ENCODE measurements at regions of chr4 and their contacts with region 1.

Region 1: GRCh38 chr4:14138106-14138505 is 510.6 kb upstream of the BOD1L1 start:
- DNase-seq: no peak
- ATAC-seq: no peak
- H3K4me3 ChIP-seq: no peak overlapping the region
- H3K4me3 Mint-ChIP-seq: no peak overlapping the region
- H3K27ac ChIP-seq: no peak overlapping the region
- H3K27ac Mint-ChIP-seq: no peak overlapping the region
- H3K4me1 ChIP-seq: no peaks in the 10 kb centered on the region
- H3K4me1 Mint-ChIP-seq: no peaks in the 10 kb centered on the region
- H3K27me3 ChIP-seq: no peaks in the 10 kb centered on the region
- H3K27me3 Mint-ChIP-seq: no peaks in the 10 kb centered on the region
- CTCF ChIP-seq: no peak

Region 2: DNA sequence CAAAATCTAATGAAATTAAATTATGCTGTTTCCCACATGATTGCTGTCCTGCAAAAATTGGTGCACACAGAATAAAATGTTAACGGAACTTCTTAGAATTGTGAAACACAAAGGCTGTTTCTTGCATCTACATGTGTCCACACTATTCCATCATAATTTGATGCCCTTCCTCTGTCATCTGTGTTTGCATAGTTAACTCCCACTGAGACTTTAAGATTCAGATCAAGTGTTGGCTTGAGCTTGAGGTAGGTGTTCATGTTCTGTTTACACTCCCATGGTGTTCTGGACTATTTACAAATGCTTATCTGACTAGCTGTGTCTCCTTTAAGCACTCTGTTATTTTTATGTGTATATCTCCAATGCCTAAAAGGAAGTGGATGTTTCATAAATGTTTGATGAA is 1276.8 kb before region 1 on chr4:
- CTCF ChIA-PET with region 1: no interaction called
- POLR2A ChIA-PET with region 1: no interaction called
- intact Hi-C with region 1: no loop called
- DNase-seq: no peak
- ATAC-seq: no peak
- H3K4me3 ChIP-seq: no peak overlapping the region
- H3K4me3 Mint-ChIP-seq: no peak overlapping the region
- H3K27ac ChIP-seq: no peak overlapping the region
- H3K27ac Mint-ChIP-seq: no peak overlapping the region
- H3K4me1 ChIP-seq: no peaks in the 10 kb centered on the region
- H3K4me1 Mint-ChIP-seq: no peaks in the 10 kb centered on the region
- H3K27me3 ChIP-seq: no peaks in the 10 kb centered on the region
- H3K27me3 Mint-ChIP-seq: peaks cover 7% of the 10 kb centered on the region
- CTCF ChIP-seq: no peak

Region 3: DNA sequence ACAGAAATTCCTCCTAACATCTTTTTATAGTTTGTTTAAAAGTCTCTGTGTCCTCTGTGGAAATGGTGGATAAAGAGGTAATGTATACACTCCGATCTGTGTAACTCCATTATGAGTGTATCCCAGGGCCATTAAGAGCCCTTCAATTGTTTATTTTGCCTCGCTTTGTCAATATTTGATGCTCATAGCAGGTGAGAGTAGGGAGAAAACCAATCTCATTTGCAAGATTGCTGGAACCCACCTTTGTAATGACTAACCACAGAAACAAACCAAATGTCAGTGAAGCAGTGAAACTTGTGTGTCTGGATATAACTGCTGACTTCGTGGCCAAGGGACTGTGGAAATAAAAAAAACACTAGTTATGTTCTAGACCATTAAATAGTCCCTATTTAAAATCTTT is 87.6 kb after region 1 on chr4:
- CTCF ChIA-PET with region 1: no interaction called
- POLR2A ChIA-PET with region 1: no interaction called
- intact Hi-C with region 1: no loop called
- DNase-seq: no peak
- ATAC-seq: no peak
- H3K4me3 ChIP-seq: no peak overlapping the region
- H3K4me3 Mint-ChIP-seq: no peak overlapping the region
- H3K27ac ChIP-seq: no peak overlapping the region
- H3K27ac Mint-ChIP-seq: no peak overlapping the region
- H3K4me1 ChIP-seq: no peaks in the 10 kb centered on the region
- H3K4me1 Mint-ChIP-seq: peaks cover 2% of the 10 kb centered on the region
- H3K27me3 ChIP-seq: no peaks in the 10 kb centered on the region
- H3K27me3 Mint-ChIP-seq: no peaks in the 10 kb centered on the region
- CTCF ChIP-seq: no peak

Region 4: DNA sequence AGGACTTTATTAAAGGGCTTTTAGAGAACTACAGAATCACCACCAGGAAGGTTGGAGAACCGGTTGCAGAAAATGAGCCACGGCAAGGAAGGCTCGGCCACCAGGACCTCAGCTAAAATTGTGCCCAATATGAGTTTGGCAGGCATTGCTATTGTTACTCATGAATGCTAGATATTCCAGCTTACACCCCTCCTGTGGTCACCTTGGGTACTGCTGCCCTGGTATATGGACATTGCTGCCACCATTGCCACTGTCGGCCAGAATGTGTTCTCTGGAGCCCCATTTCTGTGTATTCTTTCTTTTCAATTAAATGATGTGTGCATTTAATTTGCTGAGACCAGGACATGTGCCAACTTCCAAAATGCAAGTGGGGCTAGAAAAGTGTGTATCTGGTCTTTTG is 116.1 kb after region 1 on chr4:
- CTCF ChIA-PET with region 1: no interaction called
- POLR2A ChIA-PET with region 1: no interaction called
- intact Hi-C with region 1: loop called (anchors 5 kb)
- DNase-seq: peak; percentile 31
- ATAC-seq: peak; percentile 45
- H3K4me3 ChIP-seq: no peak overlapping the region
- H3K4me3 Mint-ChIP-seq: no peak overlapping the region
- H3K27ac ChIP-seq: no peak overlapping the region
- H3K27ac Mint-ChIP-seq: no peak overlapping the region
- H3K4me1 ChIP-seq: no peaks in the 10 kb centered on the region
- H3K4me1 Mint-ChIP-seq: no peaks in the 10 kb centered on the region
- H3K27me3 ChIP-seq: no peaks in the 10 kb centered on the region
- H3K27me3 Mint-ChIP-seq: no peaks in the 10 kb centered on the region
- CTCF ChIP-seq: peak; percentile 61

Measured in B cell (primary cell).